Natural killer cell (primary cell): ENCODE measurements at regions of chr2 and their contacts with region 1.

Region 1: DNA sequence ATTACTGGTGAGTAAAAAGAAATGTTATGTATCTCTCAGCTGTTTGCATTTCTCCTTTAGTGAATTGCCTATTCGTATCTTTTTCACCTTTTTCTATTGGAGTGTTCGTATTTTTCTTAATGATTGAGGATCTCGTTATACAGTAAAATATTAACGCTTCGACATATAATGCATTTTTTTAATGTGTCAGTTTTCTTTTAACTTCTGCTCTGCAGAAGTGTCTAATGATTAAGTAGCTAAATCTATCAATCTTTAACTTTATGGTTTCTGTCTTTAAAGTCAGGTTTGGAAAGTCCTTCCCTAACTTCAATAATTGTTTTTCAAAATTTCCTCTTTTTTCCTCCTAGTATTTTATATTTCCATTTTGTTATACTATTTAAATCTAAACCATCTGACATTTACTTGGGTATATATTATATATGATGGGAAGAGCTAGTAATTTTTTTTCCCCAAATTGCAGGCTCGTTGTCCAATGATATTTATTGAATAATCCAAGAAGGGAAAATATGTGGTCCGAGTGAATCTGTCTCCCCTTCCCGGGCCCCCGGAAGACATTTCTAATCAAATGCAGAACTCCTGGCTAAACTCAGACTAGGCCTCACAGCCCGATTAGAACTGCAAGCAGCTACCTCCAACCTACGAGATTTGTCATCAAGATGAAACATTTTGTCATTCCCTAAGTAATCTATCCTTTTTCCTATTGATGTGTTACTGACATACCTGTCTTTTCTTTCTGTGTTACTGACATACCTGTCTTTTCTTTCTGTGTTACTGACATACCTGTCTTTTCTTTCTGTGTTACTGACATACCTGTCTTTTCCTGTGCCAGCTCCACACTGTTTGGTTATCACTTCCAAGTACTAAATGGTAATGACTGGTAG is 17.2 kb downstream of the PCBP1 start:
- DNase-seq: peak in 1 of 2 donors; percentile 56
- ATAC-seq: no peak
- H3K4me3 ChIP-seq: peak overlapping the region; percentile 4
- H3K4me3 Mint-ChIP-seq: peak overlapping the region; percentile 86
- H3K27ac ChIP-seq: peak overlapping the region; percentile 84
- H3K27ac Mint-ChIP-seq: peak overlapping the region; percentile 91 to 97
- H3K4me1 ChIP-seq: peaks cover 53% of the 10 kb centered on the region
- H3K4me1 Mint-ChIP-seq: peaks cover 41 to 48% of the 10 kb centered on the region in 2 donors
- H3K27me3 ChIP-seq: no peaks in the 10 kb centered on the region
- H3K27me3 Mint-ChIP-seq: no peaks in the 10 kb centered on the region
- CTCF ChIP-seq: no peak

Region 2: GRCh38 chr2:70124983-70125480 is 20.6 kb after region 1 on chr2:
- intact Hi-C with region 1: loop called (anchors 1 kb)
- DNase-seq: peak; percentile 68 to 81
- ATAC-seq: peak; percentile 63 to 72 (median 70)
- H3K4me3 ChIP-seq: peak overlapping the region; percentile 62
- H3K4me3 Mint-ChIP-seq: peak overlapping the region; percentile 94
- H3K27ac ChIP-seq: peak overlapping the region; percentile 100
- H3K27ac Mint-ChIP-seq: peak overlapping the region; percentile 96 to 98
- H3K4me1 ChIP-seq: peaks cover 63% of the 10 kb centered on the region
- H3K4me1 Mint-ChIP-seq: peaks cover 71 to 78% of the 10 kb centered on the region in 2 donors
- H3K27me3 ChIP-seq: no peaks in the 10 kb centered on the region
- H3K27me3 Mint-ChIP-seq: no peaks in the 10 kb centered on the region
- CTCF ChIP-seq: no peak